SK-N-SH (cell line): ENCODE measurements at regions of chr13 and their contacts with region 1.

Region 1: DNA sequence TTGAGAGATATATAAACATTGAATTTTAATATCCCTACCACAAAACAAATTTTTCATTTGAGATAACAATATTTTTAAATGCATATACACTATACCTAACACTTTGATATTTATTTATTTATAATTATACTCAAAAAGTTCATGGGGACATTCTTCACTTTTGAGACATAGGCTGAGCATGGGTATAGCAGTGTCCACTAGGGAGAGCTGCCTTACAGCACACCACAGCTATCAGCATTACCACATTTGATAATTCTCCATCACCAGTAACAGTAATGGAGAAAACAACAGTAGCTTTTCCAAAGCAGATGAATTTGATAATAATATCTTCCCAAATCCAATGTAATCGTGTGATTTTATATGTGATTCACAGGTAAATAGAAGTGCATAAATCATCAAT is 626.1 kb downstream of the DACH1 start:
- DNase-seq: peak; percentile 35
- H3K4me3 ChIP-seq: no peak overlapping the region
- H3K27ac ChIP-seq: no peak overlapping the region
- H3K4me1 ChIP-seq: no peaks in the 10 kb centered on the region; a peak in 3 of 4 replicates
- H3K27me3 ChIP-seq: no peaks in the 10 kb centered on the region
- CTCF ChIP-seq: peak; percentile 55
- EP300 ChIP-seq: no peak
- RAD21 ChIP-seq: peak; percentile 84

Region 2: GRCh38 chr13:71054358-71054757 is 186.6 kb before region 1 on chr13:
- CTCF ChIA-PET with region 1: no interaction called
- POLR2A ChIA-PET with region 1: no interaction called
- DNase-seq: no peak
- H3K4me3 ChIP-seq: no peak overlapping the region
- H3K27ac ChIP-seq: no peak overlapping the region
- H3K4me1 ChIP-seq: no peaks in the 10 kb centered on the region
- H3K27me3 ChIP-seq: no peaks in the 10 kb centered on the region
- CTCF ChIP-seq: no peak
- EP300 ChIP-seq: no peak
- RAD21 ChIP-seq: no peak

Region 3: GRCh38 chr13:71210861-71211260 is 30.1 kb before region 1 on chr13:
- CTCF ChIA-PET with region 1: no interaction called
- POLR2A ChIA-PET with region 1: no interaction called
- DNase-seq: no peak
- H3K4me3 ChIP-seq: no peak overlapping the region
- H3K27ac ChIP-seq: no peak overlapping the region
- H3K4me1 ChIP-seq: no peaks in the 10 kb centered on the region
- H3K27me3 ChIP-seq: no peaks in the 10 kb centered on the region
- CTCF ChIP-seq: no peak
- EP300 ChIP-seq: no peak
- RAD21 ChIP-seq: no peak

Region 4: GRCh38 chr13:71252184-71252704 is 11.3 kb after region 1 on chr13:
- CTCF ChIA-PET with region 1: interaction called, 10 read pairs
- POLR2A ChIA-PET with region 1: no interaction called
- DNase-seq: no peak
- H3K4me3 ChIP-seq: no peak overlapping the region
- H3K27ac ChIP-seq: no peak overlapping the region
- H3K4me1 ChIP-seq: no peaks in the 10 kb centered on the region
- H3K27me3 ChIP-seq: no peaks in the 10 kb centered on the region
- CTCF ChIP-seq: no peak
- EP300 ChIP-seq: no peak
- RAD21 ChIP-seq: no peak

Region 5: DNA sequence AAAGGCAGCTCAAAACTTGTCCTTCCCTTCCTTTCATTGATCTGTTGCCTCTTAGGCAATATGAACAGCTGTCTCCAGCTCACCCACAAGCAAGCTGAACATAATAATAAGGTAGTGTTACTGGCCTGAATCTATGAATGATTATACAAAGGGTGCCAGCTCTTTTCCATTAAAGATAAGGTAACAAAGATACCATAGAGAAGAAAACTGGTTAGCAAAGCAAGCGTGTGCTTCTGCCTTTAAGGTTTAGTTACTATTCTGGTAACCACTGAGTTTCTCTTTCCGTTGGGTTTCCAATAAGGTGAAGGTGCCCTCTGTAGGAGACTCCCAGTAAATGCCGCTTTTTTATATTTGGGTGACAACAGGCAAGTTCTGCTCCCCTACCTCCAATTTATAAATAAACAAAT is 638.2 kb after region 1 on chr13:
- CTCF ChIA-PET with region 1: interaction called, 10 read pairs
- POLR2A ChIA-PET with region 1: no interaction called
- DNase-seq: peak; percentile 33
- H3K4me3 ChIP-seq: no peak overlapping the region; a peak in 1 of 4 replicates
- H3K27ac ChIP-seq: peak overlapping the region in 1 of 2 experiments; percentile 56; a peak in 2 of 4 replicates
- H3K4me1 ChIP-seq: peaks cover 0 to 2% of the 10 kb centered on the region in 2 experiments; a peak in 1 of 4 replicates
- H3K27me3 ChIP-seq: no peaks in the 10 kb centered on the region
- CTCF ChIP-seq: peak; percentile 71
- EP300 ChIP-seq: no peak
- RAD21 ChIP-seq: peak; percentile 86